Mammary epithelial cell (primary cell): ENCODE measurements at regions of chr11 and their contacts with region 1.

Region 1: GRCh38 chr11:68946465-68947036 is 34.2 kb downstream of the MRGPRD start:
- DNase-seq: peak; percentile 68
- H3K4me3 ChIP-seq: no peak overlapping the region
- H3K27ac ChIP-seq: no peak overlapping the region
- H3K4me1 ChIP-seq: no peaks in the 10 kb centered on the region
- H3K27me3 ChIP-seq: no peaks in the 10 kb centered on the region
- CTCF ChIP-seq: no peak

Region 2: GRCh38 chr11:68649851-68650555 is 296.5 kb before region 1 on chr11:
- CTCF ChIA-PET with region 1: no interaction called
- dilution Hi-C with region 1: loop called (anchors 5 kb)
- in situ Hi-C with region 1: no loop called
- intact Hi-C with region 1: no loop called
- DNase-seq: no peak
- H3K4me3 ChIP-seq: no peak overlapping the region
- H3K27ac ChIP-seq: no peak overlapping the region
- H3K4me1 ChIP-seq: peaks cover 14% of the 10 kb centered on the region
- H3K27me3 ChIP-seq: peaks cover 3% of the 10 kb centered on the region
- CTCF ChIP-seq: no peak

Region 3: DNA sequence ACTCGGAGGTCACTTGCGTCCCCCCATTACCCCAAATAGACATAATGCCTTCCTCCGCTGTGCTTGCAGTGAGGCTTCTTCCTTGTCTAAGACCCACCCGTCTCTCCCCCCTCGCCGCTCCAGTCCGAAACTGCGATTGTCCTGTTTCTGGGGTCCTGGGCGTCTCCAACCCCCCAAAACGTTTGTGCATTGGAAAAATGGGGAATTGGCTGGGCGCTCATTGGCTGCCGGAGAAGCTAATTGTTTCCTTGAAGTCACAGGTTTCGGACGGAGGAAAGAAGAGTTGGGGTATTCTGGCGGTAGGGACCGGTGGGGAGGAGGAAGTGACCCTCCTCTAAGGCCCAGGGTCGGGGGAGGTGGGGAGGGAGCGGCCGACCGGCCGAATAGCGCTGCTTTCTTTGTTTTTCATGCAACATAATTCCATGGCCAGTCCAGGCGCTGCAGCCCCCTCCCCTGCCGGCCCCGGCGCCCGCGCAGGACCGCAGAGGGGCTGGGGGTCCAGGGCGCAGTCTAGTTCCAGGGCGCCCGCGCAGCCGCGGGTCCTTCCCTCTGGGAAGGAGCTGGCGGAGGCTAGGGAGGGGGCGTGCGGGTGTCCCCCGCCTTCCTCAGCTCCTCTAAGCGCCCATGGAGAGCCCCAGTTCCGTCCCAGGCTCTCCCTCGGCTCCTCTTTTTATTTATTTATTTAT is 92.1 kb before region 1 on chr11:
- CTCF ChIA-PET with region 1: no interaction called
- dilution Hi-C with region 1: loop called (anchors 5 kb)
- in situ Hi-C with region 1: no loop called
- intact Hi-C with region 1: no loop called
- DNase-seq: no peak
- H3K4me3 ChIP-seq: no peak overlapping the region
- H3K27ac ChIP-seq: no peak overlapping the region
- H3K4me1 ChIP-seq: peaks cover 5% of the 10 kb centered on the region
- H3K27me3 ChIP-seq: peaks cover 17% of the 10 kb centered on the region
- CTCF ChIP-seq: no peak

Region 4: DNA sequence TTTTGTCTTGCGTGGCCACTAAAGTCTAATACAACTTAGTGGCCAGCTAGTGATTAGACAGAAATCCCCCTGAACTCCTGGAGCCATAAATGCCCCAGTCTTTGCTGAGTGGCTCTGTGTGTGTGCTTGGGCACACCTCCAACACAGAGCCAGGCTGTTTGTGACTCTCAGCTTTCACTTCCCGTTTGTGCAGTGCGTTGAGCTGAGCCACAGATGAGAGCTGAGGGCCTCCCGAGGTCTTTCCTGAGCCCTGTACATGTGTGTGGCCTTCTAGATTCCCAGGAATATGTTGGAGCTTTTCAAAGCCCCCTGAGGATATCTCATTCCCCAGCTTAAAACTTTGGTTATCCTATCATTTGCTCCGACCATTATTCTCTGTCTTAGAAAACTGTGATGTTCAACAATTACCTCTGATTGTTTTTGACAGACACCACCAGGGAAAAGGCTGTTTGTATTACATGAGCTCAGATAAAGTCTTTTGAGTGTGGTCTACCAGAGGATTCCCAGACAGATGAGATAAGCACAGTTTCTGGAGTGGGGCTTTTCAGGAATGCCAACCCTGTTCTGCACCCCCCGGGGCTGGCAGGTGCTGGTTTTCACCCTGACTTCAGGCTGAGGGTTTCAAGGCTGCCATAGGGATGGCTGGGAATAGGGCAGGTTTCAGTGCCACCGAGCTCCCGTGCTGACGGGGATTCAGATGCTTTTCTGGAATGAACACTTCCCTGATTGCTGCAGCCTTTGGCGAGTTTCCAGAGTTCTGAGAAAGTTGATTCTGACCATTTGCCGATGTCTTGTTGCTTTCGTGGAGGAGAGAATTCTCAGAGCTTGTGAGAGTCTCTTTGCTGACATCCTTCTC is 19.0 kb before region 1 on chr11:
- CTCF ChIA-PET with region 1: no interaction called
- dilution Hi-C with region 1: no loop called
- in situ Hi-C with region 1: no loop called
- intact Hi-C with region 1: no loop called
- DNase-seq: no peak
- H3K4me3 ChIP-seq: no peak overlapping the region
- H3K27ac ChIP-seq: no peak overlapping the region
- H3K4me1 ChIP-seq: no peaks in the 10 kb centered on the region
- H3K27me3 ChIP-seq: no peaks in the 10 kb centered on the region
- CTCF ChIP-seq: no peak

Region 5: GRCh38 chr11:69670158-69670845 is 723.8 kb after region 1 on chr11:
- CTCF ChIA-PET with region 1: no interaction called
- dilution Hi-C with region 1: loop called (anchors 25 kb)
- in situ Hi-C with region 1: no loop called
- intact Hi-C with region 1: no loop called
- DNase-seq: peak; percentile 63
- H3K4me3 ChIP-seq: no peak overlapping the region
- H3K27ac ChIP-seq: no peak overlapping the region
- H3K4me1 ChIP-seq: peaks cover 19% of the 10 kb centered on the region
- H3K27me3 ChIP-seq: no peaks in the 10 kb centered on the region
- CTCF ChIP-seq: peak; percentile 98 to 99